Heart right ventricle (tissue), 16 donors: ENCODE measurements at regions of chr2 and their contacts with region 1.

Region 1: GRCh38 chr2:223909001-223909741 is 36.0 kb downstream of the WDFY1 start:
- DNase-seq: peak in 1 of 2 donors; percentile 20
- ATAC-seq: peak in 5 of 8 donors; percentile 29 to 85 (median 75)
- H3K4me3 ChIP-seq: no peak overlapping the region
- H3K27ac ChIP-seq: peak overlapping the region in 3 of 10 donors; percentile 32 to 57 (median 32)
- H3K4me1 ChIP-seq: peaks cover 5 to 28% (median 20%) of the 10 kb centered on the region in 9 donors
- H3K27me3 ChIP-seq: no peaks in the 10 kb centered on the region
- CTCF ChIP-seq: no peak

Region 2: DNA sequence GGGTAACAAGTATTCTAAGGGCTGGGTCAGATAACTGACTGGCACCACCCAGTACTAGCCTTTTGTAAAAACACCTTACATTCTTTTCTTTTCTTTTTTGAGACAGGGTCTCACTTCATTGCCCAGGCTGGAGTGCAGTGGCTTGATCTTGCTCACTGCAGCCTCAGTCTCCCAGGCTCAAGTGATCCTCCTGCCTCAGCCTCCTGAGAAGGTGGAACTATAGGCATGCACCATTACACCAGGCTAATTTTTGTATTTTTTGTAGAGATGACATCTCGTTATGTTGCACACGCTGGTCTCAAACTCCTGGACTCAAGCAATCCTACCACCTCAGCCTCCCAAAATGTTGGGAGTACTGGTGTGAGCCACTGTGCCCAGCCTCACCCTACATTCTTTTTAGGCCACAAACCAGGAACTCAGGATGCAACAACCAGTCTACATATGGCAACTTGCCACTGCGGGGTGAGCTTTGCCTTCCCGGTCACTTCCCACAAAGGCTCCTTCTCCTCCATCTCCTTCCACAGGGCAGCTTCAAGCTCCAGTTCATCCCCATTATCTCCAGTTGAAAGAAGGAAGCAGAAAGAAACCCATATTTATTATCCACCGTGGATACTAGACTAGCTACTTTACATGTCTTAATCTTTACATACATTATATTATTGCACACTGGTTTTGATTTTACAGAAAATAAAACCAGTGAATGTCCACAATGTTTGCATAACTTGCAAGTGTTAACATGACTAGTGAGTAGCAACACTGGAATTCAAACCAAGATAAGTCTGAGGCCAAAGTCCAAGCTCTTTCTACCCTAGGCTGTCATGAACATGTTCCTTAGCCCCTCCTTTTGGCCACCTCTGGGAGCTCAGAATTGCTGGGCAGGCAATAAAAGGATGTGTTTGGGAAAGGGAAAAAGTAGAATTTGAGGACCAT is 48.1 kb before region 1 on chr2:
- intact Hi-C with region 1: no loop called
- DNase-seq: no peak
- ATAC-seq: peak in 1 of 8 donors; percentile 42
- H3K4me3 ChIP-seq: no peak overlapping the region
- H3K27ac ChIP-seq: no peak overlapping the region
- H3K4me1 ChIP-seq: no peaks in the 10 kb centered on the region
- H3K27me3 ChIP-seq: no peaks in the 10 kb centered on the region
- CTCF ChIP-seq: no peak

Region 3: GRCh38 chr2:223944703-223945531 is 35.7 kb after region 1 on chr2 and contains the start of gene WDFY1:
- intact Hi-C with region 1: loop called in 2 of 10 experiments (anchors 5 to 10 kb)
- DNase-seq: peak; percentile 87 to 91
- ATAC-seq: peak; percentile 96 to 98 (median 96)
- H3K4me3 ChIP-seq: peak within 1 kb of the TSS; percentile 76 to 100 (median 97)
- H3K27ac ChIP-seq: peak within 1 kb of the TSS; percentile 92 to 99 (median 96)
- H3K4me1 ChIP-seq: peaks cover 8 to 45% (median 36%) of the 10 kb centered on the region in 9 donors
- H3K27me3 ChIP-seq: no peaks in the 10 kb centered on the region
- CTCF ChIP-seq: peak in 1 of 9 donors; percentile 4
- total RNA-seq, gene WDFY1: 10.9 to 25.9 (median 14.7) TPM